Heart right ventricle (tissue), 16 donors: ENCODE measurements at regions of chr15 and their contacts with region 1.

Region 1: GRCh38 chr15:64355944-64356709 is at the start of gene CSNK1G1:
- DNase-seq: peak; percentile 93 to 97
- ATAC-seq: peak; percentile 100
- H3K4me3 ChIP-seq: peak within 1 kb of the TSS; percentile 54 to 93 (median 82)
- H3K27ac ChIP-seq: peak within 1 kb of the TSS in 9 of 10 donors; percentile 10 to 88 (median 78)
- H3K4me1 ChIP-seq: peaks cover 0 to 31% (median 22%) of the 10 kb centered on the region in 9 donors
- H3K27me3 ChIP-seq: no peaks in the 10 kb centered on the region
- CTCF ChIP-seq: peak in 6 of 9 donors; percentile 15 to 56 (median 50)
- total RNA-seq, gene CSNK1G1: 5.5 to 9.4 (median 7.6) TPM

Region 2: GRCh38 chr15:64162870-64163658 is 193.1 kb before region 1 on chr15 and contains the start of gene PPIB:
- intact Hi-C with region 1: loop called in 1 of 10 experiments (anchors 10 kb)
- DNase-seq: peak; percentile 97 to 99
- ATAC-seq: peak; percentile 95 to 98 (median 97)
- H3K4me3 ChIP-seq: peak within 1 kb of the TSS; percentile 51 to 95 (median 92)
- H3K27ac ChIP-seq: peak within 1 kb of the TSS; percentile 78 to 95 (median 90)
- H3K4me1 ChIP-seq: peaks cover 27 to 56% (median 51%) of the 10 kb centered on the region in 9 donors
- H3K27me3 ChIP-seq: no peaks in the 10 kb centered on the region
- CTCF ChIP-seq: peak in 8 of 9 donors; percentile 39 to 68 (median 48)
- total RNA-seq, gene PPIB: 60.3 to 178 (median 83.7) TPM

Region 3: GRCh38 chr15:64209680-64210334 is 146.3 kb before region 1 on chr15:
- intact Hi-C with region 1: loop called in 9 of 10 experiments (anchors 2 to 10 kb)
- DNase-seq: no peak
- ATAC-seq: no peak
- H3K4me3 ChIP-seq: no peak overlapping the region
- H3K27ac ChIP-seq: no peak overlapping the region
- H3K4me1 ChIP-seq: no peaks in the 10 kb centered on the region
- H3K27me3 ChIP-seq: no peaks in the 10 kb centered on the region
- CTCF ChIP-seq: peak in 8 of 9 donors; percentile 4 to 68 (median 48)

Region 4: GRCh38 chr15:64324165-64324877 is 31.8 kb before region 1 on chr15:
- intact Hi-C with region 1: no loop called
- DNase-seq: no peak
- ATAC-seq: no peak
- H3K4me3 ChIP-seq: no peak overlapping the region
- H3K27ac ChIP-seq: no peak overlapping the region
- H3K4me1 ChIP-seq: peaks cover 0 to 7% (median 0%) of the 10 kb centered on the region in 9 donors
- H3K27me3 ChIP-seq: no peaks in the 10 kb centered on the region
- CTCF ChIP-seq: no peak

Region 5: GRCh38 chr15:64381000-64381752 is 25.0 kb after region 1 on chr15 and contains the start of gene PCLAF:
- intact Hi-C with region 1: loop called in 1 of 10 experiments (anchors 1 kb)
- DNase-seq: peak; percentile 93 to 95
- ATAC-seq: peak; percentile 98 to 100 (median 100)
- H3K4me3 ChIP-seq: peak within 1 kb of the TSS; percentile 31 to 74 (median 60)
- H3K27ac ChIP-seq: no peak within 1 kb of the TSS
- H3K4me1 ChIP-seq: peaks cover 0 to 18% (median 9%) of the 10 kb centered on the region in 9 donors
- H3K27me3 ChIP-seq: no peaks in the 10 kb centered on the region
- CTCF ChIP-seq: peak in 3 of 9 donors; percentile 7
- total RNA-seq, gene PCLAF: 0.17 to 4.5 (median 0.42) TPM in 5 of 10 donors, not detected in the others

Region 6: GRCh38 chr15:64387562-64388168 is 31.5 kb after region 1 on chr15 and contains the start of gene TRIP4:
- intact Hi-C with region 1: loop called in 1 of 10 experiments (anchors 2 kb)
- DNase-seq: peak; percentile 94 to 95
- ATAC-seq: peak; percentile 99 to 100 (median 100)
- H3K4me3 ChIP-seq: peak within 1 kb of the TSS; percentile 57 to 88 (median 73)
- H3K27ac ChIP-seq: peak within 1 kb of the TSS; percentile 5 to 87 (median 82)
- H3K4me1 ChIP-seq: peaks cover 0 to 22% (median 14%) of the 10 kb centered on the region in 9 donors
- H3K27me3 ChIP-seq: no peaks in the 10 kb centered on the region
- CTCF ChIP-seq: peak in 4 of 9 donors; percentile 21 to 34 (median 27)
- total RNA-seq, gene TRIP4: 15.3 to 20.0 (median 17.4) TPM

Region 7: DNA sequence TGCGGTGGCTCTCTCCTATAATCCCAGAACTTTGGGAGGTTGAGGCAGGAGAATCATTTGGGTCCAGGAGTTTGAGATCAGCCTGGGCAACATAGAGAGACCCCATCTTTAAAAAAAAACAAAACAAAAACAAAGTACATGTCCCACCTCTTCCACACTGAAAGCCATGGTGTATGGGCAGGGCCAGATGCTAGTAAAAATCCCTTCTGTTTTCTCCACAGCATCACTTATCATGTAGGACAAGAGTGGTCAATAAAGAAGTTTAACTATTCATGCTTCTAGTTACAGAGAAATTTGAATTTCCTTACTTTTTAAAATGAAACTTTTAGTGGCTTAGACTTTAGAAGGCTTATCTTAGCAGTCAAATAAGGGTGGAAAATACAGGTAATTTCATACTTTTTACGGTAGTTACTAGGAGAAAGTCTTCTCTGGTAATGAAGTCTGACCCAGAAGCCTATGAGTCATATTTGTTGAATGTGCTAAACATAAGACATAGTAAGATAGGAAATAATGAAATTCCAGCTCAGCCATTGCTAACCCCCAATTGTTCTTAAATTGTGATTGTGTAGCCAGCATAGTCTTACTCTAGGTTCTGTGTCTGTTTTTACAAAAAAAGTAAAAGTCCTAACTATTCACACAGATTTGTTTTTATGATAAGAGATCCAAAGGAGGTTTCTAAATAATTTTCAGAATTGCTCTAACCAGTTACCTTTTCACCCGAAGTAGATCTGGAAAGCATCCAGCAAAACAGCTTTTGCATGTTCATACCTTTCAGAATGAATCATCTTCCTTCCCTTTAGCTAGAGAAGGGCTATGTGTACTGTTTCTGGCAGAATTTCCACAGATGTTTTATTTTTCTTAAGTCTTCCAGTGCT is 87.9 kb after region 1 on chr15:
- intact Hi-C with region 1: no loop called
- DNase-seq: peak in 1 of 2 donors; percentile 6
- ATAC-seq: peak in 5 of 8 donors; percentile 33 to 79 (median 62)
- H3K4me3 ChIP-seq: no peak overlapping the region
- H3K27ac ChIP-seq: peak overlapping the region in 5 of 10 donors; percentile 31 to 68 (median 51)
- H3K4me1 ChIP-seq: peaks cover 0 to 24% (median 8%) of the 10 kb centered on the region in 9 donors
- H3K27me3 ChIP-seq: no peaks in the 10 kb centered on the region
- CTCF ChIP-seq: no peak